Posterior vena cava (tissue), 2 donors: ENCODE measurements at regions of chr3 and their contacts with region 1.

Region 1: GRCh38 chr3:43670635-43671522 is 19.9 kb upstream of the ABHD5 start:
- DNase-seq: no peak

Region 2: GRCh38 chr3:42746455-42747450 is 924.1 kb before region 1 on chr3:
- intact Hi-C with region 1: no loop called
- DNase-seq: no peak

Region 3: DNA sequence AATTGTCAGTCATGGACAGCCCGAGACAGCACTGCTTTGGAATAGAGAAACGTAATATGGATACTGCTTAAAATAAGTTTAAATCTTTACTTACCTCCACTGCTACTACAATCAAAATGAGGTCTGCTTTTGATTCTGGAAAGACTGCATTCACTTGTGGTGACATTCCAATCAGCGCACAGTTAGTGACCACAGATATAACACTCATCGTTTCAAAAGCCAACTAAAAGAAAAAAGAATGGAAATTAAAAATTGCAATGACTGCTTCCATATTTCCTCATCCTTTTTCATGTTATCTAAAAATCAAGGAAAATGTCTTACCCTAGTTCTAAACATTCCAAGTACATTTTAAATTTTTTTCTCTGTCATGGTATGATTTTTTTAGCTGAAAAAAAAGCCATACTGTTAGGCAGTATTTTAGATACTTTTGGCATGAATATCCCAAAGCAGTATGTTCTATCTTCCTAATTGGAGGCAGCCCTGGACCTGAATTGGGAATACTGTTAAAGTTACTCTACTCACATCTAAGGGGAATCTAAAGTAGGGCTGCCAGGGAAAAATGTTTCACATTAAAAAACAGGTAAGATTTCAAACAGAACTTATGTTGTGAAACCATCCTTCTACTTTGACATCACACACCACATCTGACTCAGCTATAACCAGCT is 121.1 kb before region 1 on chr3:
- intact Hi-C with region 1: no loop called
- DNase-seq: no peak

Region 4: GRCh38 chr3:43641306-43642114 is 29.4 kb before region 1 on chr3:
- intact Hi-C with region 1: loop called in 1 of 2 experiments (anchors 1 kb)
- DNase-seq: no peak

Region 5: GRCh38 chr3:44120721-44121582 is 450.1 kb after region 1 on chr3:
- intact Hi-C with region 1: no loop called
- DNase-seq: no peak